ENCODE measurements at regions of chr4 and their contacts with region 1.

Region 1: DNA sequence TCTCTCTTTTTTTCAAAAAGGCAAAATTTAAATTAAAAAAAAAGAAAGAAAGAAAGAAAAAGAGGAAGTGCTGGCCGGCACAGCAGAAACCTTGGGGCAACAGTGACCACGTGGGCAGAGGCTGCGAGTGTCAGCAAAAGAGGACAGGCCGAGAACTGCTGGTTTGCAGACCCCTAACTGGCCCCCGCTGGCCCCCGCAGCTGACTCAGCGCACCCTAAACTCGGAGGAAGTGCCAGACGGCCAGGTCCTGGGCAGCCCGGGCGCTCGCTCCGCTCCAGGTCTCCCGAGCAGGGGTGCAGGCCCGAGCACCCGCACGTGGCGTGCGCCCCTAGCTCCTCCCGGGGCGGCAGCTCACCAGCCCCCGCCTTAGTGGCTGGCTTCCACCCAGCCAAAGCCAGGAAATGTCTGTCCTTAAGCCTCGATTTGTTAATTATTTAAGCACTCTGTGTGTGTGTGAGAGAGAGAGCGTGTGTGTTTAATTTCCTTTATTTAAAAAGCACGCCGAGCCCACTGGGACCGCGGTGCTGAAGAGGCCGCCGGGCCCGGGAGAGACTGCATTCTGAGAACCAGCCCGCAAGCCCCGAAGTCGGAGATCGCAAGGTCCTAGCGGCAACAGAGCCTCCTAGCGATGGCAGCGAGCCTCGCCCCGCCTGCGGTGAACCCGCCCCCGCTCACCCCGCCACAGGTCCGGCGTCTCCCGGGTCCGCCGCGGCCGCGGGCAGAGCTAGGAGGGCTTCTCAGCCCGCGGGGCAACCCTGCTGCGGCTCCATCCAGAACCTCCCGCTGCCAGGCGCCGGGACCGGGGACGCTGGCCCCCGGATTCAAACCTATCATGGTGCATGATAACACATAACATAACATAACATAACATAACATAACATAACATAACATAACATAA is 46.0 kb upstream of the CDKN2AIP start:
- DNase-seq: peak; percentile 54
- H3K4me3 Mint-ChIP-seq: peak overlapping the region; percentile 85
- H3K27ac Mint-ChIP-seq: peak overlapping the region; percentile 85
- H3K4me1 Mint-ChIP-seq: peaks cover 31% of the 10 kb centered on the region
- H3K27me3 Mint-ChIP-seq: peaks cover 36% of the 10 kb centered on the region

Region 2: DNA sequence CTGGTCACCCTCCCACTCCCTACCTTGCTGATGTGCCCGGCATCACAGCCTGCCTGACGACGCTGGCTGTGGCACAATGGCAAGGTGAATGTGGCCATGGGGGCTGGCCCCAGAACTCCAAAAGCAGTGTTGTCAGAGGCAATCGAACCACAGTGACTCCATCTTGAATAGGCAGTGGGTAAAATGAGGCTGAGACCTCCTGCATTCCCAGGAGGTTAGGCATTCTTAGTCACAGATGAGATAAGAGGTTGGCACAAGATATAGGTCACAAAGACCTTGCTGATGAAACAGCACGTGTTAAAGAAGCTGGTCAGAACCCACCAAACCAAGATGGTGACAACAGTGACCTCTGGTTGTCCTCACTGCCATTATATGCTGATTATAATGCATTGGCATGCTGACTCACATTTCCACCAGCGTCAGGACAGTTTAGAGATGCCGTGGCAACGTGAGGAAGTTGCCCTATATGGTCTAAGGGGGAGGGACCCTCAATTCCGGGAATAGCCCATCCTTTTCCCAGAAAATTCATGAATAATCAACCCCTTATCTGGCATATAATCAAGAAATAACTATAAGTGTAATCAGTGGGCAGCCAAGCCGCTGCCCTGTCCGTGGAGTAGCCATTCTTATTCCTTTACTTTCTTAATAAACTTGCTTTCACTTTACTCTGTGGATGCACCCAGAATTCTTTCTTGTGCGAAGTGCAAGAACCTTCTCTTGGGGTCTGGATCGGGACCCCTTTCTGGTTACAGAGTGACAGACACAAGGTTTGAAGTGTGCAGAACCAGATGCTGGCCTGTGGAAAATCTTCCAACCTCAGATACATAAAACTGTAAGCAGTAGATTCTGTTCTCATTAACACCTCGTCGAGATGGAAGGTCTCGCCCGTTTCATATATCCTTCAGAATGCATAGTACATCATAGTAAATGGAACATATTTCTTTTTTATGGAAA is 49.5 kb before region 1 on chr4:
- intact Hi-C with region 1: loop called (anchors 5 kb)
- DNase-seq: no peak
- H3K4me3 Mint-ChIP-seq: no peak overlapping the region
- H3K27ac Mint-ChIP-seq: no peak overlapping the region
- H3K4me1 Mint-ChIP-seq: peaks cover 11% of the 10 kb centered on the region
- H3K27me3 Mint-ChIP-seq: no peaks in the 10 kb centered on the region

Region 3: DNA sequence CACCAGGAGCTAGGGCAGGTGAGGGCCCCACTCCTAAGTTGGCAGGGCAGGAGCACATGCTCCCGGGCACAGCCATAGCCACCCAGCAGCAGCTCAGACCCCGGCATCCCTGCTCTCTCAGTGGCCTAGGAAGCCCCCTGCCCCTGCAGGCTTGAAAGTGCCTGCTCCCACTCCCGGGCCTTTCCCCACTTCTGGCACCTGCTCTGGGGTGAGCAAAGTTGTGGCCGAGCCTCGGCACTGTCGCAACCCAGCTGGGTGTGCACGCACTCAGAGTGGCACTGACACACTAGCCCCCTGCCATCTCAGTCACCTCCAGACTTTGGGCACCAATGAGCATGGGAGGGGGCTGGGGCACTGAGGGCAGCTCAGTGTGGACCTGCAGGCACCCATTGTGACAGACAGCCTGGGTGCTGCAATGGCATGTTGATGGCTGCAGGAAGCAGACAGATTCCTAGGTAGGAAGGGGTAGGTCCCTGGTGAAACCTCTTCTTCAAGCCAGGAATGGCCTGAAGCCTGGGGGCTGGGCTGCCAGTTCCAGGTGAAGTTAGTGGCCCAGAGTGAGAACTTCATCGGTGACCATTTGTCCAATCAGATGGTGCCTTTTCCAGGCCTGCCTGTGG is 14.8 kb before region 1 on chr4:
- intact Hi-C with region 1: no loop called
- DNase-seq: no peak
- H3K4me3 Mint-ChIP-seq: no peak overlapping the region
- H3K27ac Mint-ChIP-seq: no peak overlapping the region
- H3K4me1 Mint-ChIP-seq: no peaks in the 10 kb centered on the region
- H3K27me3 Mint-ChIP-seq: no peaks in the 10 kb centered on the region

Measured in activated T-helper 2 cell treated with anti-CD3 and anti-CD28 coated beads, Interferon-gamma antibody, Interleukin-2, Interleukin-4, amounts not matched to agents 10 μg/mL and 5 μg/mL and 100 μg/mL, durations not matched to agents 14 hours and 24 hours and 36 hours (primary cell).